ENCODE measurements at regions of chr11 and their contacts with region 1.

Region 1: GRCh38 chr11:18310800-18311340 is 11.1 kb downstream of the HPS5 start:
- DNase-seq: peak; percentile 70
- ATAC-seq: peak; percentile 84
- H3K4me3 ChIP-seq: no peak overlapping the region
- H3K27ac ChIP-seq: peak overlapping the region; percentile 47
- H3K4me1 ChIP-seq: peaks cover 22% of the 10 kb centered on the region
- H3K27me3 ChIP-seq: no peaks in the 10 kb centered on the region
- CTCF ChIP-seq: no peak
- EP300 ChIP-seq: peak in 1 of 2 experiments; percentile 7; a peak in 1 of 4 replicates
- POLR2A ChIP-seq: no peak
- RAD21 ChIP-seq: no peak

Region 2: DNA sequence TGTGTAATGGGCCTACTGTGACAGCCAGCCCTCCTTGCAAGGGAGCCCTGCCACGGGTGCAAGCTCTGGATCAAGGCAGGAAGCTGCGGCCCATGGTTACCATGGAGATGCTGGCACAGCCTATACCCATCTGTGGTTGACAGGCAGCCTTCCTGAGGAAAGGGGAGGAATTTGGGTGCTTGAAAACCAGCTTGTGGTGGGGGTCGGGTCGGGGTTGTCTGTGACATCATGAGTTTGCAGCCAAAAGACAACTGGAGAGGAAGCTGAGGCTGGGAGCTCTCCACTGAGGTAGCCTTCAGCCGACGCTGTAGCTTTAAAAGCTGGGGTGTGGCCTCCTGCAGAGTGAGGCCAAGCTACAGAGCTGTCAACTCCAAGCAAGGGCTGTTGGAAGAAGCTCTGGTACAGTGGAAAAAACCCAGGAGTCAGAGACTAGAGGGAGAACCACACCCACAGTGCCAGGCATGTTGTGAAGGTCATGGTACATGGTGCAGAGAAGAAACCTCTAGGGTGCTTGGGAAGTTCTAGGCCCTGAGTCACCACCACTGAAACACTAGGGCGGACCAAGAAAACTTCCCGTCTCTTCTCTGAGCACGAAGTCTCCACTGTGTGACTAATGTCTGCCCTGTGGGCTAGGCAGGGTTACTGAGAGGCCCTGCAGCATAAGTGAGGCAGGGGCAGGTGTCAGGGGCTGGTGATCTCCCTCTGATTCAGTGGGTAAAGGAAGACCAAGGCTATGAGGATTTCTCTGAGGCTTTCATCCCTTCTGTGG is 72.7 kb after region 1 on chr11:
- CTCF ChIA-PET with region 1: no interaction called
- POLR2A ChIA-PET with region 1: no interaction called
- RAD21 ChIA-PET with region 1: interaction called, 3 read pairs
- SMC1A ChIA-PET with region 1: interaction called, 11 read pairs
- in situ Hi-C with region 1: no loop called
- intact Hi-C with region 1: no loop called
- DNase-seq: peak; percentile 70
- ATAC-seq: peak; percentile 93
- H3K4me3 ChIP-seq: 0 out of 2 replicates have a peak overlapping the region, but pooled peaks have one; percentile 22
- H3K27ac ChIP-seq: peak overlapping the region; percentile 98
- H3K4me1 ChIP-seq: peaks cover 22% of the 10 kb centered on the region
- H3K27me3 ChIP-seq: no peaks in the 10 kb centered on the region
- CTCF ChIP-seq: no peak
- EP300 ChIP-seq: no peak; a peak in 1 of 4 replicates
- POLR2A ChIP-seq: peak; percentile 71; the same call in 1 of the 2 replicates
- RAD21 ChIP-seq: no peak

Region 3: GRCh38 chr11:18736590-18737148 is 425.8 kb after region 1 on chr11:
- CTCF ChIA-PET with region 1: no interaction called
- POLR2A ChIA-PET with region 1: no interaction called
- RAD21 ChIA-PET with region 1: no interaction called
- SMC1A ChIA-PET with region 1: no interaction called
- in situ Hi-C with region 1: no loop called
- intact Hi-C with region 1: no loop called
- DNase-seq: no peak
- ATAC-seq: no peak
- H3K4me3 ChIP-seq: no peak overlapping the region
- H3K27ac ChIP-seq: no peak overlapping the region
- H3K4me1 ChIP-seq: peaks cover 3% of the 10 kb centered on the region
- H3K27me3 ChIP-seq: no peaks in the 10 kb centered on the region
- CTCF ChIP-seq: no peak
- EP300 ChIP-seq: no peak
- POLR2A ChIP-seq: no peak
- RAD21 ChIP-seq: no peak